Ovary (tissue), 10 donors: ENCODE measurements at regions of chr17 and their contacts with region 1.

Region 1: GRCh38 chr17:6699997-6700947 is 12.9 kb downstream of the SLC13A5 start:
- DNase-seq: no peak
- H3K4me3 ChIP-seq: no peak overlapping the region
- H3K27ac ChIP-seq: no peak overlapping the region
- H3K4me1 ChIP-seq: no peaks in the 10 kb centered on the region
- H3K27me3 ChIP-seq: no peaks in the 10 kb centered on the region
- CTCF ChIP-seq: no peak
- EP300 ChIP-seq: no peak
- POLR2A ChIP-seq: no peak

Region 2: DNA sequence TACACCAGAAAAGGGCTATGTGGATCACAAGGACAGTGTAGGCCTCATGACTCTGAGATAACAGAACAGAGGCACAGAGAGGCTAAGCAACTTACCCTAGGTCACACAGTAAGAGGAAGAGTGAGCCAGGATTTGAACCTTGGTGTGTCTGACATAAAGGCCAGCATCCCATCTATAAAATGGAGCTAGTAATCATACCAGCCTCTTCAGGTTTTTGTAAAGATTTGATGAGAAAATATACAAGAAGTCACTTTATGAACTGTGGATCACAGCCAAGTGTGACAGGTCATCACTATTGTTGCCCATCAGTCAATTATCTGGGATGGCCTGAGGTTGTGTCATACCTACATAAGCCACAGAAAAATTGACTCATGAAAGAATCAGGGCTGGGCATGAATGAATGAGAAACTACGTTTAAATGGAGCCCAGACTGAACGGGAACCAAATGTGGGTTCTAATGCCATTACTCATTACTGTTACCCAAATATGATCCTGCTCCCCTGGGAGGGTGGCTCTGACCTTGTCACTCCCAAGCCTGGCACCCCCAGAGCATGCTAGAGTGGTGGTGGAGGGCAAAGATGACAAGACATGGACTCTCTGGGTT is 96.7 kb after region 1 on chr17:
- intact Hi-C with region 1: loop called in 1 of 4 experiments (anchors 10 kb)
- DNase-seq: no peak
- H3K4me3 ChIP-seq: no peak overlapping the region
- H3K27ac ChIP-seq: no peak overlapping the region
- H3K4me1 ChIP-seq: no peaks in the 10 kb centered on the region
- H3K27me3 ChIP-seq: no peaks in the 10 kb centered on the region
- CTCF ChIP-seq: no peak
- EP300 ChIP-seq: no peak
- POLR2A ChIP-seq: no peak

Region 3: GRCh38 chr17:6823011-6823442 is 122.8 kb after region 1 on chr17:
- intact Hi-C with region 1: no loop called
- DNase-seq: no peak
- H3K4me3 ChIP-seq: no peak overlapping the region
- H3K27ac ChIP-seq: no peak overlapping the region
- H3K4me1 ChIP-seq: no peaks in the 10 kb centered on the region
- H3K27me3 ChIP-seq: no peaks in the 10 kb centered on the region
- CTCF ChIP-seq: no peak
- EP300 ChIP-seq: no peak
- POLR2A ChIP-seq: no peak